Activated CD4-positive, alpha-beta memory T cell treated with anti-CD3 and anti-CD28 coated beads for 36 hours (primary cell): ENCODE measurements at regions of chr6 and their contacts with region 1.

Region 1: GRCh38 chr6:8219352-8219943 is 117.1 kb upstream of the EEF1E1 start:
- DNase-seq: peak; percentile 40
- H3K4me3 Mint-ChIP-seq: no peak overlapping the region
- H3K27ac Mint-ChIP-seq: no peak overlapping the region
- H3K4me1 Mint-ChIP-seq: no peaks in the 10 kb centered on the region
- H3K27me3 Mint-ChIP-seq: peaks cover 7% of the 10 kb centered on the region

Region 2: DNA sequence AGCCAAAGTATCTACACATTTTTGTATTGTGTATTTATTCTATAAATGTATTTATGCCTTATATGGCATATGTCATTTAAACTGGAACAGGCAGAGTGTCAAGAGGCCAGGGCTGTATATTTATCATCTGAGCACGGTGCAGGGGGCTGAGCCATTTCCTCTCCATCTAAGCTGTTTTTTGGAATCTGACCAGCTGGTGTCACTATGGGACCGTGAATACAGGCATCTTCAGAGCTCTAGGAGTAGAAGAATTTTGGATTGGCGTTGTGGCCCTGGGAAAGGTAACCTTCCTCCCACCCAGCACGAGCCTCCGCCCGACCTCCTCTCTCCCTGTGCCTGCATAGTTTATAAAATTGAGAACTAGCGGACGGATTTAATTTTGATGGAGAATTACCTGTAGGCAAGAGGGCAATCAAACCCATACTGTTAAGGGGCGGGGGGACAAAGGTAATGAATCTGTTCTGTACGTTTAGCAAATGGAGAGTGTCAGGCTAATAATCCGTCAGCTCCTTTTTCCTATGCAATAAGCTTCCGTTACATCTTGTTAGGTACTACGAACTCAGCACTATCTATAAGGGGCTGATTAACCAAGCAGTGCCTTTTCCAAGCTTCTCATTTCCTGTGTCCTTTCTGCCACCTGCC is 88.1 kb before region 1 on chr6:
- CTCF ChIA-PET with region 1: interaction called, 178 read pairs
- POLR2A ChIA-PET with region 1: no interaction called
- intact Hi-C with region 1: loop called (anchors 1 kb)
- DNase-seq: peak; percentile 44
- H3K4me3 Mint-ChIP-seq: no peak overlapping the region
- H3K27ac Mint-ChIP-seq: no peak overlapping the region
- H3K4me1 Mint-ChIP-seq: no peaks in the 10 kb centered on the region
- H3K27me3 Mint-ChIP-seq: peaks cover 21% of the 10 kb centered on the region

Region 3: DNA sequence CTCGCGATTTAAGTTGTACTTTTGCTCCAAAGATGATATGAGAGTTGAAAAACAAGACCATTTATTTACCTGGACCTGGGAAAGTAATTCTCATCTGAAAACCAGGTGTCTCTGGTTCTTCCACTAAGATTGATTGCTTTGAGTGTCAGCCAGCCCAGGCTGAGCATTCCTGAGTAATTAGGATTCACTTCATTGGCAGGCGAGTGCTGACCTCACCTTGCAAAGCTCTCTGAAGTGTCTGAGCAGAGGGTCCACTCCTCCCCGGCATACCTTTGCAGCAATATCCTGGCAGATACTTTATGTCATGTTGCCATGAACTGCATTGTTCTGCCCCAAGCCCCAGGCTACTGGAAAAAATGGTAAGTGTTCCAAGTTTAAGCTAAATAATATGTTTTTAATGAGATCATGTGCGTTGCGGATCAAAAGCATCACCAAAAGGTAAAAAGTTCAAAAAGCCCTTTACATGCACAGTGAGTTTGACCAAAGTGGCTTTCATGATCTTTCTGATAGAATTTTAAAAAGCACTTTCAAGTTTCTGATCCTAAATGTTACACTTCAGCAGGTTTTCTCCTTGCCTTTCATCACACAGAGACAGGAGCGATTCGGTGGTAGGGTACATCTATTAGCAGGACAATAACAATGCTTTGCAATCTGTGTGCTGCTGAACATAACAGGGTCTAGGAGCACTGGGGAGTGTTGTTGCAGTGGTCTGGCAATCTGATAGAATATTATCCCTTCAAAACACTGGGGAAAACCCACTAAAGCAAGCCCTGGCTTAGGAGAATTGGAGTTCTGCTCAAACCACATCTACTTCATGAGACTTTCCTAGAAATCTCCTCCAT is 10.7 kb after region 1 on chr6:
- CTCF ChIA-PET with region 1: interaction called, 16 read pairs
- POLR2A ChIA-PET with region 1: no interaction called
- intact Hi-C with region 1: no loop called
- DNase-seq: no peak
- H3K4me3 Mint-ChIP-seq: no peak overlapping the region
- H3K27ac Mint-ChIP-seq: no peak overlapping the region
- H3K4me1 Mint-ChIP-seq: no peaks in the 10 kb centered on the region
- H3K27me3 Mint-ChIP-seq: peaks cover 3% of the 10 kb centered on the region